Uterus (tissue), 4 donors: ENCODE measurements at regions of chr7 and their contacts with region 1.

Region 1: GRCh38 chr7:143416565-143417149 is 8.0 kb upstream of the EPHA1 start:
- DNase-seq: no peak
- H3K4me3 ChIP-seq: no peak overlapping the region
- H3K27ac ChIP-seq: peak overlapping the region; percentile 40 to 44
- H3K4me1 ChIP-seq: no peaks in the 10 kb centered on the region
- H3K27me3 ChIP-seq: no peaks in the 10 kb centered on the region
- CTCF ChIP-seq: peak; percentile 75 to 82 (median 79)
- POLR2A ChIP-seq: no peak

Region 2: GRCh38 chr7:143239813-143240212 is 176.8 kb before region 1 on chr7:
- intact Hi-C with region 1: loop called (anchors 5 kb)
- DNase-seq: no peak
- H3K4me3 ChIP-seq: no peak overlapping the region
- H3K27ac ChIP-seq: no peak overlapping the region
- H3K4me1 ChIP-seq: no peaks in the 10 kb centered on the region
- H3K27me3 ChIP-seq: no peaks in the 10 kb centered on the region
- CTCF ChIP-seq: no peak
- POLR2A ChIP-seq: no peak

Region 3: GRCh38 chr7:143490717-143491306 is 74.2 kb after region 1 on chr7:
- intact Hi-C with region 1: no loop called
- DNase-seq: no peak
- H3K4me3 ChIP-seq: no peak overlapping the region
- H3K27ac ChIP-seq: no peak overlapping the region
- H3K4me1 ChIP-seq: no peaks in the 10 kb centered on the region
- H3K27me3 ChIP-seq: no peaks in the 10 kb centered on the region
- CTCF ChIP-seq: peak in 1 of 4 experiments; percentile 9
- POLR2A ChIP-seq: no peak